Dorsolateral prefrontal cortex (tissue), 120 donors: ENCODE measurements at regions of chr1 and their contacts with region 1.

Region 1: GRCh38 chr1:156625436-156626078 is 6.3 kb downstream of the HAPLN2 start:
- DNase-seq: peak in 8 of 10 donors; percentile 61 to 73 (median 68)
- H3K4me3 ChIP-seq: peak overlapping the region in 58 of 59 donors; percentile 27 to 74 (median 56)
- H3K27ac ChIP-seq: peak overlapping the region in 55 of 59 donors; percentile 26 to 99 (median 79)
- H3K27me3 ChIP-seq: peaks cover 0 to 29% (median 0%) of the 10 kb centered on the region in 45 donors
- CTCF ChIP-seq: peak; percentile 67 to 95 (median 84)

Region 2: GRCh38 chr1:156654700-156655099 is 29.1 kb after region 1 on chr1:
- intact Hi-C with region 1: loop called (anchors 1 kb)
- DNase-seq: no peak
- H3K4me3 ChIP-seq: no peak overlapping the region
- H3K27ac ChIP-seq: peak overlapping the region in 10 of 59 donors; percentile 2 to 63 (median 29)
- H3K27me3 ChIP-seq: peaks cover 0 to 2% (median 0%) of the 10 kb centered on the region in 45 donors
- CTCF ChIP-seq: no peak

Region 3: DNA sequence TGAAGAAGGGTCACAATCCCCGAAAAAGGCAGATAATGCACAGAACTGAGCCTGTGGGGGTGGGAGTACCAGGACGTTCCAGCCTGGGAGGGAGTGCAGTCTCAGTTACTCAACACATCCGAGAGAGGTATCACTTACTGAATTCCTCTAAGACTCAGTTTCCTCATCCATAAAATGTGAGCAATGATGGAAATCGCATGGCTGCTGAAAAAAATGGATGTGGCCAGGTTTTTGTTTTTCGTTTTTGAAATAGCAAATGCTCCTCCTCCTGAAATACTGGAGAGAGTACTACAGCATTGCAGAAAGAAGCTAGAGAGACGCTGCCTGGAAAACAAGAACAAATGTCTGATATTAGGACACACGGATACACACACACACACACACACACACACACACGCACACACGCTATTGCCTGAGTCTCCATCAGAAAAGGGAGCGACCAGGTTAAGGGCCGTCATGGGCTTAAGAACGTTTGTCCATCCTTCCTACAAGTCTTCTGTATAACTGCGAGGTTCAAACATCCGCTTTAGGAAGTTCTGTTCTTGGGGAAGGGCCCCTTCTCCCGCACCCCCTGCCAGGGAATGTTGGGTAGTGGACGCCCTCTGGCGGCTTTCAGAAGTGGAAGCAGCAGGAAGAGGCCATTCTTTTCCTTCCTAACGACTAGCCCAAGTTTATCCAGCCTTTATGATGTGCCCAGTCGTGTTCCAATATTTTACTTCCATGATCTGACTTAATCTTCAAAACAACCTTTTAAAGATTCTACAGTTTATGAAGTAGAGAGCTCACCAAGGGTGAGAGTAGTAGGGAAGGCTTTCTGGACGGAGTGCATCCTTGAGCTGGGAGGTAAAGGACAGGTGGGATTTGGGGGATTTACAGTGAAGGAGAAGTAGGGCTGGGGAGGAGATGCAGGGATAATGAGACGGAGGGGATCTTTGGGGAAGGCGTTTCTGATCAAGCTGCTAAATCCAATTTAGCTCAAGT is 52.3 kb after region 1 on chr1:
- intact Hi-C with region 1: loop called in 1 of 2 experiments (anchors 5 kb)
- DNase-seq: peak in 8 of 10 donors; percentile 57 to 79 (median 71)
- H3K4me3 ChIP-seq: peak overlapping the region in 57 of 59 donors; percentile 20 to 68 (median 51)
- H3K27ac ChIP-seq: peak overlapping the region in 39 of 59 donors; percentile 12 to 86 (median 72)
- H3K27me3 ChIP-seq: peaks cover 0 to 13% (median 0%) of the 10 kb centered on the region in 45 donors
- CTCF ChIP-seq: peak; percentile 72 to 96 (median 92)

Region 4: GRCh38 chr1:156910309-156910782 is 284.8 kb after region 1 on chr1:
- intact Hi-C with region 1: no loop called
- DNase-seq: peak in 2 of 10 donors; percentile 26 to 39
- H3K4me3 ChIP-seq: no peak overlapping the region
- H3K27ac ChIP-seq: no peak overlapping the region
- H3K27me3 ChIP-seq: peaks cover 0 to 71% (median 37%) of the 10 kb centered on the region in 45 donors
- CTCF ChIP-seq: peak; percentile 50 to 90 (median 78)